ENCODE measurements at regions of chr1 and their contacts with region 1.

Region 1: GRCh38 chr1:155091071-155091709 is 12.6 kb downstream of the EFNA3 start:
- DNase-seq: peak; percentile 75 to 83 (median 79)
- ATAC-seq: peak; percentile 77
- H3K4me3 ChIP-seq: no peak overlapping the region
- H3K27ac ChIP-seq: no peak overlapping the region
- H3K4me1 ChIP-seq: peaks cover 9% of the 10 kb centered on the region
- H3K27me3 ChIP-seq: no peaks in the 10 kb centered on the region
- CTCF ChIP-seq: peak; percentile 91 to 98 (median 95)
- POLR2A ChIP-seq: no peak

Region 2: GRCh38 chr1:155127105-155127964 is 36.1 kb after region 1 on chr1 and contains the start of gene EFNA1:
- intact Hi-C with region 1: loop called (anchors 5 kb)
- DNase-seq: peak; percentile 78 to 88 (median 81)
- ATAC-seq: peak; percentile 64
- H3K4me3 ChIP-seq: peak within 1 kb of the TSS; percentile 79 to 91
- H3K27ac ChIP-seq: peak within 1 kb of the TSS; percentile 94 to 99 (median 98)
- H3K4me1 ChIP-seq: peaks cover 58% of the 10 kb centered on the region
- H3K27me3 ChIP-seq: no peaks in the 10 kb centered on the region
- CTCF ChIP-seq: no peak
- POLR2A ChIP-seq: peak; percentile 75 to 92 (median 87)
- total RNA-seq, gene EFNA1: 10.5 to 20.2 TPM

Region 3: GRCh38 chr1:155167166-155168104 is 76.2 kb after region 1 on chr1:
- intact Hi-C with region 1: loop called (anchors 5 kb)
- DNase-seq: peak; percentile 90 to 91 (median 91)
- ATAC-seq: peak; percentile 85
- H3K4me3 ChIP-seq: no peak overlapping the region
- H3K27ac ChIP-seq: peak overlapping the region in 2 of 4 donors; percentile 2 to 45
- H3K4me1 ChIP-seq: peaks cover 17% of the 10 kb centered on the region
- H3K27me3 ChIP-seq: no peaks in the 10 kb centered on the region
- CTCF ChIP-seq: peak; percentile 79 to 95 (median 93)
- POLR2A ChIP-seq: no peak

Region 4: GRCh38 chr1:155636397-155637153 is 545.4 kb after region 1 on chr1:
- intact Hi-C with region 1: no loop called
- DNase-seq: no peak
- ATAC-seq: no peak
- H3K4me3 ChIP-seq: no peak overlapping the region
- H3K27ac ChIP-seq: no peak overlapping the region
- H3K4me1 ChIP-seq: no peaks in the 10 kb centered on the region
- H3K27me3 ChIP-seq: no peaks in the 10 kb centered on the region
- CTCF ChIP-seq: no peak
- POLR2A ChIP-seq: no peak

Measured in body of pancreas (tissue), 4 donors.